ENCODE measurements at regions of chr9 and their contacts with region 1.

Region 1: DNA sequence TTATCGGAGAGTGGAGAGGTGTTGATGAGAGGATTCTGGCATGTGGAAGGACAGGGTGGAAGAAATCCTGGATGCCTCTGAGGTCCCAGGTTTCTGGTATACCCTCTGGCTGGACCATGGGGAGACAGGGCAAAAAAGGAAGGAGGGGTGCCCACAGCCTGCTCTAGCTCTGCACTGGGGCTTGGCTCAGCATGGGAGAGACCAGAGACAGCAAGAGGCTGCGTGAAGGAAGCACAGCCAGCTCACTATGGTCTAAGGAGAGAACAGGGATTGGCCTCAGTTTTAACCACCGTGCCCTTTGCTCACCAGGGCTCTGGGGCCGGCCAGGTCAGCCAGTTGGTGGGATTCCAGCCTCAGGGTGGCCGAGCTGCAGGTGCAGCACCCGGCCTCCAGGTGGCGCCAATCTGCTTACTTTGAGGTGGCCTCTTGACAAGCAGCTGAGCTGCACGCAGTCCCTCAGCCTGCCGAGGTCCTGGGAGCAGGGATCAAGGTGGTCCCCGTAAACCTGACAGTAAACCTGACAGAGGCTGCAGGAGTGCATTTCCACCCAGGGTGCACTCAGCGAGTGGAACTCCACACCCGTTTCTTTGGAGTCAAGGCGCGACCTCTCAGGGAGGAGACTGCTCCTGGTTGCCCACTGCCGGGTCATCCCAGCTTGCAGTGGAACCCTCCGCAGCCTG is 25.0 kb upstream of the SPTLC1 start:
- DNase-seq: peak; percentile 66
- ATAC-seq: peak; percentile 74
- H3K4me3 Mint-ChIP-seq: peak overlapping the region; percentile 46
- H3K27ac Mint-ChIP-seq: no peak overlapping the region
- H3K4me1 Mint-ChIP-seq: peaks cover 10% of the 10 kb centered on the region
- H3K27me3 Mint-ChIP-seq: peaks cover 42% of the 10 kb centered on the region
- CTCF ChIP-seq: peak; percentile 74

Region 2: GRCh38 chr9:92115071-92115858 is 24.9 kb before region 1 on chr9 and contains the start of gene SPTLC1:
- CTCF ChIA-PET with region 1: interaction called, 12 read pairs
- POLR2A ChIA-PET with region 1: no interaction called
- intact Hi-C with region 1: no loop called
- DNase-seq: peak; percentile 93
- ATAC-seq: peak; percentile 98
- H3K4me3 Mint-ChIP-seq: peak within 1 kb of the TSS; percentile 100
- H3K27ac Mint-ChIP-seq: peak within 1 kb of the TSS; percentile 99
- H3K4me1 Mint-ChIP-seq: peaks cover 24% of the 10 kb centered on the region
- H3K27me3 Mint-ChIP-seq: no peaks in the 10 kb centered on the region
- CTCF ChIP-seq: no peak
- total RNA-seq, gene SPTLC1: 40.8 and 41.0 TPM in 2 replicates

Region 3: GRCh38 chr9:92170848-92171247 is 30.6 kb after region 1 on chr9:
- CTCF ChIA-PET with region 1: interaction called, 11 read pairs
- POLR2A ChIA-PET with region 1: no interaction called
- intact Hi-C with region 1: no loop called
- DNase-seq: no peak
- ATAC-seq: no peak
- H3K4me3 Mint-ChIP-seq: no peak overlapping the region
- H3K27ac Mint-ChIP-seq: no peak overlapping the region
- H3K4me1 Mint-ChIP-seq: no peaks in the 10 kb centered on the region
- H3K27me3 Mint-ChIP-seq: peaks cover 9% of the 10 kb centered on the region
- CTCF ChIP-seq: no peak

Region 4: DNA sequence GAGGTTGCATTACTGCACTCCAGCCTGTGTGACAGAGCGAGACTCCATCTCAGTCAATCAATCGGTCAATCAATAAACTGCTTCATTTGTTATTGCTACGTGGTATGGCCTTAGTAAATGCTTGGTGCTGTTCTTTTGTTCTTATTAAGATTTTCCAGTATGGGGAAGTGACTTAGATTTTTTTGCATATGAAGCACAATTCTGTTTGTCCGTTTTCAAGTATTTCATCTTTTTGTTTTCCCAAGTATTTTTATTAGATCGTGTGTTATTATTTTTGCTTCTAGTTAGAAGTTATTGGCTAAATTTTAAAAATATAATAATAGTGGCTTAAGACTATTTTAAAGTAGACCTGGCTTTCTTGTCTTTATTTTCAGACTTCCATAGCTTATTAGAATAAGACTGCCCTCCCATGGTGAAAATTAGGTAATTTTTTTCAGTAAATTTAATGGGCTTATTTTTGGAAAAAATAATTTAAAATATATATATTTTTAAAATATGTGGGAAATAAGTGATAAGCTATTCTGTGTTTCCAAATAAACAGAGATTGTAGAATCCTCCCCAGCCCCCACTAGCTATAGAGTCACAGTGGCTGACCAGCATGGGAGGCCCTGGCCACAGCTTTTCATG is 298.8 kb after region 1 on chr9:
- CTCF ChIA-PET with region 1: interaction called, 9 read pairs
- POLR2A ChIA-PET with region 1: no interaction called
- intact Hi-C with region 1: loop called (anchors 1 kb)
- DNase-seq: no peak
- ATAC-seq: no peak
- H3K4me3 Mint-ChIP-seq: no peak overlapping the region
- H3K27ac Mint-ChIP-seq: no peak overlapping the region
- H3K4me1 Mint-ChIP-seq: no peaks in the 10 kb centered on the region
- H3K27me3 Mint-ChIP-seq: no peaks in the 10 kb centered on the region
- CTCF ChIP-seq: no peak

Region 5: GRCh38 chr9:92634712-92635605 is 494.7 kb after region 1 on chr9:
- CTCF ChIA-PET with region 1: interaction called, 18 read pairs
- POLR2A ChIA-PET with region 1: no interaction called
- intact Hi-C with region 1: loop called (anchors 1 kb)
- DNase-seq: peak; percentile 41
- ATAC-seq: peak; percentile 81
- H3K4me3 Mint-ChIP-seq: no peak overlapping the region
- H3K27ac Mint-ChIP-seq: no peak overlapping the region
- H3K4me1 Mint-ChIP-seq: no peaks in the 10 kb centered on the region
- H3K27me3 Mint-ChIP-seq: no peaks in the 10 kb centered on the region
- CTCF ChIP-seq: no peak

Region 6: DNA sequence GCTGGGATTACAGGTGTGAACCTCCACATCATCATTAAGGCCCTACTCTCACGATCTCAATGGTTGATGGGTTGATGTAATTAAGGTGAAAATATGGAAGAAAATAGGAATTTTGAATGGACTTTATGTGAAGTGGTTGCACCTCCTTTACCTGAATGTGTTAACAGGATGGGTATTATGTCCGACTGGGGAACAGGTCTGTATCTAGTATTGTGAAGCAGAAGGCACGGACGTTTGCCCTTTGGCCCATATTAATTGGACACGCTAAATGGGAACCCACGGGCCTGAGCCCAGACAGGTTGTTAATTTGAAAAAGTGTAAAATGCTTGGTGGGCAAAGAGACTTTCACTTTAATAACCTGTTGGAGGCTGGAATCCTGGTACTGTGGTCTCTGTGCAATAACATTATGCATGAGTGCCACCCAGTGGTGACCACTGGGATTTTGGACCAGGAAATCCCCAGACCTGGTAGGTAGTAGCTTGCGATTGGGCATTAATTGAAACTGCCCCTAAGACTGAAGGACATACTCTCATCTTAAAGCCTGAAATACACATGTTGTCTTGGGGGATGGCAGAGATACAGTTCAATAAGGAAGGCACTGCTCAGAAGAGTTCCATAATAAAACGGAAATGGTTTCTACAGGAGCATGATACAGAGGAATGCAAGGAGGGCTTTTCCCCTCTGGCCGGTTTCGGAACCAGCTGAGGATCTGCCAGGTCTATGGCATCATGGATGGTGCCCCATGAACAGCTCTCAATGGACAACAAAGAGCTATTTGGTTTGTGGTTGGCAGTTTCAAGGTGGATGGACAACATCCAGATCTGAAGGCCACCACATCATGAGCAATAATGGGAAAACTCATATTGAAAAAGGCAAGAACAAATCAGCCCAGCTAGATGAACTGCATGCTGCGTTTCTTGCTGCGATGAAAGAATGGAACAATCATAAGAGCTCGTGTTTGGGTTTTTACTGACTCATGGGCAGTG is 650.6 kb after region 1 on chr9:
- CTCF ChIA-PET with region 1: interaction called, 20 read pairs
- POLR2A ChIA-PET with region 1: no interaction called
- intact Hi-C with region 1: loop called (anchors 1 kb)
- DNase-seq: peak; percentile 65
- ATAC-seq: peak; percentile 98
- H3K4me3 Mint-ChIP-seq: no peak overlapping the region
- H3K27ac Mint-ChIP-seq: no peak overlapping the region
- H3K4me1 Mint-ChIP-seq: peaks cover 6% of the 10 kb centered on the region
- H3K27me3 Mint-ChIP-seq: peaks cover 12% of the 10 kb centered on the region
- CTCF ChIP-seq: peak; percentile 84